ENCODE measurements at regions of chr19 and their contacts with region 1.

Region 1: GRCh38 chr19:45485305-45486077 is 11.4 kb downstream of the RTN2 start:
- DNase-seq: no peak
- H3K4me3 ChIP-seq: peak overlapping the region; percentile 83
- CTCF ChIP-seq: peak; percentile 93

Region 2: GRCh38 chr19:45311621-45312020 is 173.9 kb before region 1 on chr19:
- CTCF ChIA-PET with region 1: no interaction called
- POLR2A ChIA-PET with region 1: no interaction called
- DNase-seq: no peak
- H3K4me3 ChIP-seq: no peak overlapping the region
- CTCF ChIP-seq: no peak

Region 3: DNA sequence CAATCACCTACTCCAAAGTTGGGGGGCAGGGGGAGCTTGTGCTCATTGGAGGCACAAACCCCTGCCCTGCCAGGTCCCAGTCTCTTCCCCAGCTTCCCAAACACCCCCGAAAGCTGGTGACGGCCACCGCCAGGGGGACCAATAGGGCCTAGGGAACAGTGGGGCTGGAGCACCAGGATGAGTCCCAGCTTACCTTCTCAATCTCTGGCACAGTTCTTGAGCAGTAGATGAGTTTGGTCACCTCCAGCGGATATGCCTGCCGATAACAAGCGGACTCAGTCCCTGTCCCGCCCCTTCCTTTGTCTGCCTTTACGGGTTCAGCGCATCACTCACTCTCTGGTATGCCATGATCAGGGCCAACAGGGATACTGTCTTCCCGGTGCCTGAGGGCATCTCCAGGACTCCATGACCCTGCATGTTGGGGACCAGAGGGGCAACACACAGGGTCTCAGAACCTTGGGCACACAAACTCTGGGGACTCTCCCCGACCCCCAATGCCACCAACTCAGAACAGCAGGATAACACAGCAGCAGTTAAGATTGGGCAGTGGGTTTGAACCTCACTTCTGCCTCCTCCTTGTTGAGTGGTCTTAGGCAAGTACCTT is 116.7 kb before region 1 on chr19:
- CTCF ChIA-PET with region 1: interaction called, 13 read pairs
- POLR2A ChIA-PET with region 1: no interaction called
- DNase-seq: no peak
- H3K4me3 ChIP-seq: peak overlapping the region; percentile 15; the same call in 1 of the 2 replicates
- CTCF ChIP-seq: no peak

Region 4: GRCh38 chr19:45413497-45413896 is 72.0 kb before region 1 on chr19:
- CTCF ChIA-PET with region 1: interaction called, 21 read pairs
- POLR2A ChIA-PET with region 1: interaction called, 3 read pairs
- DNase-seq: no peak
- H3K4me3 ChIP-seq: no peak overlapping the region
- CTCF ChIP-seq: no peak

Region 5: DNA sequence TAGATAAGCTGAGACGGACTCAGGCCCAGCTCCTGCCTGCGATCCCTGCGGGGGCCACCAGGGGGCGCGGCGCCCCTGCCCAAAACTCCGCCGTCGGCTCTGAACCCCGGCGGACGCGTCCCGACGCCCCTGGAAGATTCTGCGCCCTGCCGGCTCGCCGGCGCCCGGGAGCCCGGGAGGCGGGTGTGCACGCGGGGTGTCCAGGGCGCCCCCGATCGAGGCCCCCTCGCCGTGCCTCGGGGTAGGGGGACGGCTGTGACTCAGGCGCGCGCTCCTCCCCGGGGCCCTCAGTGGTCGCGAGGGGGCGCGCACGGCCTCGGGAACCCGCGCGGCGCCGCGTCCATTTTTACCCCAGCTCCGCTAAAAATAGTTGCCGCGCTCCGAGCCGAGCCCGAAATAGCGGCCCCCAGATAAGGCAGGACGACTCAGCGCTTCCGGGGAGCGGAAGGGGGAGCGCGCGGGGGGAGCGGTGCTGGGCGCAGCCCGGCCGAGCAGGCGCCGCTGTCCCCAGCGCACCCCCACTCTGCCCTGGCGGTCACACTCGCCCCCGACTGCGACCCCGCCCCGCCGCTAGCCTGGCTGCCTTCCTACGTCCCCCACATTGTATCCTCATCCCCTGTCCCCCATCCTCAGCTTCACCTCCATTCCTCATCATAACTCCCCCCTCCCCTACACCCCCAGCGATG is 45.8 kb before region 1 on chr19:
- CTCF ChIA-PET with region 1: interaction called, 773 read pairs
- POLR2A ChIA-PET with region 1: interaction called, 3 read pairs
- DNase-seq: no peak
- H3K4me3 ChIP-seq: peak overlapping the region; percentile 61
- CTCF ChIP-seq: peak; percentile 85

Region 6: DNA sequence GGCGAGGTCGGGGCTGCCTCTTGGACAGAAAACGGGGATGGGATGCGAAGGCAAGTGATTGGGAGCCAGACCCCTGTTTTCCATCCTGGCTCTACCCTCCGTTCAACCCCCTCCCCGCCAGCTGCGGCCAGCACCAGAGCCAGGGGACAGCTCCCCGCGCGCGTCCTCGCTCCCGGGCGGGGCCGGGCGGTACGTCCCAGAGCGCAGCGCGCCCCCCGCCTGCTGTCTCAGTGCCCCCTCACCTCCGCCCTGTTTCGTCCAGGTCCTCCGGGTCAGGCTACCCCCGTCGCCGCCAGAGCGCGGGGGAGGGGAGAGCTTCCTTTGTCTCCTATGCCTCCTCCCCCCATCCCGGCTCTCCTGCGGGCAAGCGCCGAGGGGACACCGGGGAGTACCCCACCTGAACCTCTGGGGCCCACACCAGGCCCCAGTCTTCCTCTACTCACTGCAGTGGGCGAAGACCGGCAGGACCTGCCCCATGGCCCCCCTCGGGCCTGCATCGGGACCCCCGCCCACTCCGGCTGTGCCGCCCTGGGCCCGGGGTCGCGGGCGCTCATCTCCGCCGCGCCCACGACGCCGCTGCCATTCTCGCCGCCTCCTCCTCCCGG is 11.0 kb after region 1 on chr19:
- CTCF ChIA-PET with region 1: interaction called, 99 read pairs
- POLR2A ChIA-PET with region 1: no interaction called
- DNase-seq: no peak
- H3K4me3 ChIP-seq: peak overlapping the region; percentile 69
- CTCF ChIP-seq: no peak

Region 7: GRCh38 chr19:45809643-45810159 is 324.2 kb after region 1 on chr19:
- CTCF ChIA-PET with region 1: no interaction called
- POLR2A ChIA-PET with region 1: no interaction called
- DNase-seq: peak; percentile 23
- H3K4me3 ChIP-seq: no peak overlapping the region; the same call in 1 of the 2 replicates
- CTCF ChIP-seq: no peak